ENCODE measurements at regions of chr1 and their contacts with region 1.

Region 1: GRCh38 chr1:41891199-41891896 is 27.4 kb downstream of the HIVEP3 start:
- DNase-seq: peak; percentile 79
- ATAC-seq: peak; percentile 91
- H3K4me3 Mint-ChIP-seq: peak overlapping the region; percentile 77
- H3K27ac Mint-ChIP-seq: peak overlapping the region; percentile 94
- H3K4me1 Mint-ChIP-seq: peaks cover 72% of the 10 kb centered on the region
- H3K27me3 Mint-ChIP-seq: no peaks in the 10 kb centered on the region

Region 2: DNA sequence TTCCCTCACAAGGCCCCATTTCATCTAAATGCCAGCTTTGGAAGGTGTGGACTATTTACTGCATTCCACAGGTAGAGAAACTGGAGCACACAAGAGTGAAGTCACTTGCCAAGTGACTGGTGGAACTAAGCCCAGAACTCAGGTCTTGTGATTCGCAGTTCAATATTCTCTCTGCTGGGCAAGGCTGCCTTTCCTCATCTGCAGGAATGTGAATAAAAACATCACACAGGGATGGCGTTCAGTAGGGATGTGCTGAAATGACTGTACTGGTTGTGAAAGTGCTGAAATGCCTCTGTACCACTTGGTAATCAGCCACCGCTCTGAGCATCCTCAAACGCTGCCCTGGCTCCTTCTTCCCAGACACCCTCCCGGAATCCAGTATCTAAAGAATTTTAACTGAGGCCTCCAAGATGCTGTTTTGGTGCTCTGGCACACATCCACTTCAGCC is 118.2 kb before region 1 on chr1:
- CTCF ChIA-PET with region 1: no interaction called
- DNase-seq: no peak
- ATAC-seq: no peak
- H3K4me3 Mint-ChIP-seq: no peak overlapping the region
- H3K27ac Mint-ChIP-seq: no peak overlapping the region
- H3K4me1 Mint-ChIP-seq: no peaks in the 10 kb centered on the region
- H3K27me3 Mint-ChIP-seq: no peaks in the 10 kb centered on the region

Region 3: DNA sequence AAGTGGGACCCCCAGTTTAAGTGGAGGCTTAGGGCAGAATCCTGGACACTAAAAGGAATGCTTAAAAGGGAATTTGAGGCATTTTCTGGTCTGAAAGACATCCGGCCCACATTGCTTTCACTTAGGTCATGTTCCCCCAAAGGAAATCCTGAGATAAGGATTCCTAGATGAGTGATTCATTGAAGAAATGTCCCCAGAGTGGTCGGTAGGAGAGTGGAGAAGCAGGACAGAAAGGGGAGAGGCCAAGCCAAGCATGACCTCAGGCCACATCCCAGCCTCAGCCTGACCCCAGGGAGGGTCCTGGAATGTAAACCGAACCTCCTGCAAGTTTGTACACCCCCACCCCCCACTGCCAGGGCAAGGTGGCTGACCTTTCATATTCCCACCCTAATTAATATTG is 10.8 kb after region 1 on chr1:
- CTCF ChIA-PET with region 1: interaction called, 15 read pairs
- DNase-seq: peak; percentile 39
- ATAC-seq: no peak
- H3K4me3 Mint-ChIP-seq: peak overlapping the region; percentile 46
- H3K27ac Mint-ChIP-seq: peak overlapping the region; percentile 88
- H3K4me1 Mint-ChIP-seq: peaks cover 73% of the 10 kb centered on the region
- H3K27me3 Mint-ChIP-seq: no peaks in the 10 kb centered on the region

Region 4: GRCh38 chr1:41919764-41920397 is 28.5 kb after region 1 on chr1:
- CTCF ChIA-PET with region 1: interaction called, 107 read pairs
- DNase-seq: peak; percentile 95
- ATAC-seq: peak; percentile 91
- H3K4me3 Mint-ChIP-seq: peak overlapping the region; percentile 98
- H3K27ac Mint-ChIP-seq: peak overlapping the region; percentile 98
- H3K4me1 Mint-ChIP-seq: peaks cover 58% of the 10 kb centered on the region
- H3K27me3 Mint-ChIP-seq: no peaks in the 10 kb centered on the region

Region 5: GRCh38 chr1:41936118-41936517 is 44.8 kb after region 1 on chr1:
- CTCF ChIA-PET with region 1: no interaction called
- DNase-seq: no peak
- ATAC-seq: peak; percentile 70
- H3K4me3 Mint-ChIP-seq: no peak overlapping the region
- H3K27ac Mint-ChIP-seq: no peak overlapping the region
- H3K4me1 Mint-ChIP-seq: peaks cover 25% of the 10 kb centered on the region
- H3K27me3 Mint-ChIP-seq: no peaks in the 10 kb centered on the region

Region 6: DNA sequence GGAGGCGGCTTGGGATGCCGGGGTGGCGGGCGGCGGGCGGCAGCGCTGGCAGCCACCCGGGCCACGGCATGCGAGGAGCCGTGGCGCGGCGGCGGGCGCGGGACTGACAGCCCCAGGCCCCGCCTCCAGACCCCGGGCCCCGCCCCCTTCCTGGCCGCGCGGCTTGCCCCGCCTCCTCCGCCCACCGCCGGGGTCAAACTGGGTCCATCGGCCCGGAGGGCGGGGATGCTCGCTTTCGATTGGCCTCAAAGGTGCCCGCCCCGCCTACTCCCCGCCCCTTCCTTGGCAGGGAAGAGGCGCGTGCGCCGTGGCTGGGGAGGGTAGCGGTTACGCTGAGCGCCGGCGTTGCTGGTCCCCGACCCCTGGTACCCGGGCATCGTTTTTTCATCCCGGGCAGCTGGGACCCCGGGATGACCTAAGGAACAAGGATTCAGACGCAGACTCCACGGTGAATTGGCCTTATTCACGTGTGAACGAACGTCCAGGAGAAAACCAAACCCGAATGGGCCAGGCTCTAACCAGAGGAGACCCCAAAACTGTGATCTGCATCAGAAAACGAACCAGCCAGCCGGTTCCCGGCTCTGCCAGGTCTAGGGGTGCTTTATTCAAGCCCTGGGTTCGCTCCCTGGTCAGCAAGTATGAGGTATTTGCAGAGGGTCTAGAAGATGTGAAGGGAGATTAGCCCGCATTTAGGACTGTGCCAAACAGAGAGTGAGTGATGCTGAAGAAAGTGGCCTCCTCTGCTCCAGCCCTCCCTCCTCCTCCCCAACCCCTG is 144.7 kb after region 1 on chr1:
- CTCF ChIA-PET with region 1: interaction called, 11 read pairs
- DNase-seq: peak; percentile 98
- ATAC-seq: peak; percentile 93
- H3K4me3 Mint-ChIP-seq: peak overlapping the region; percentile 81
- H3K27ac Mint-ChIP-seq: peak overlapping the region; percentile 43
- H3K4me1 Mint-ChIP-seq: peaks cover 28% of the 10 kb centered on the region
- H3K27me3 Mint-ChIP-seq: no peaks in the 10 kb centered on the region

Measured in activated CD8-positive, alpha-beta memory T cell treated with anti-CD3 and anti-CD28 coated beads, Interleukin-2, amount 10 ng/mL, durations not matched to agents 7 days and 5 days (primary cell).